HAP-1 (cell line): ENCODE measurements at regions of chr17 and their contacts with region 1.

Region 1: GRCh38 chr17:19362277-19363113 is at the start of gene B9D1:
- DNase-seq: peak; percentile 72 to 91
- H3K4me3 ChIP-seq: peak within 1 kb of the TSS; percentile 82
- H3K4me1 ChIP-seq: peaks cover 12% of the 10 kb centered on the region
- H3K27me3 ChIP-seq: no peaks in the 10 kb centered on the region

Region 2: DNA sequence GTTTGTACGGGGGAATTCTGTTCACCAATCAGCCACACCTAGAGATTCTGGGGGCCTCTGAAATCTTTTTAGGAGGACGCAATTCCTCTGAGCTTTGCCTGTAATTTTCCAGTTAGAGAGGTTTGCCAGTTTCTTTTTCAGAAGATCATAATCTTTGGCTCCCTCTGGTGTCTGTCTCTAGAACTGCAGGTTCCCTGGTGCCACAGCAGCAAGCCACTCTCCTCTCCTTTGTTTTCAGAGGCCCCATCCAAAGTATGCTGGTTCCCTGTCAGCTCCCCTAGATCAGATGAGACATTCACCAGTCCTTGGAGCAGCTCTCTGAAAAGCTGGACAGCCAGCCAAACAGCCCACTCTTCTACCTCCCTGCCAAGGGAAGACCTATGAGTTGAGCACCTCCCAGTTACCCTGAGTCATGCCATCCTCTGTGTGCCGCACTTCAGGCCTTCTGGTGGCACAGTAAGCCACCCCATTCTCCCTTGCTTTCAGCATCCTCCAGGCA is 84.6 kb after region 1 on chr17:
- in situ Hi-C with region 1: loop called (anchors 5 kb)
- DNase-seq: peak; percentile 72 to 88
- H3K4me3 ChIP-seq: no peak overlapping the region
- H3K4me1 ChIP-seq: peaks cover 18% of the 10 kb centered on the region
- H3K27me3 ChIP-seq: no peaks in the 10 kb centered on the region

Region 3: GRCh38 chr17:19513897-19514488 is 151.5 kb after region 1 on chr17:
- in situ Hi-C with region 1: loop called (anchors 5 kb)
- DNase-seq: peak; percentile 66 to 81
- H3K4me3 ChIP-seq: no peak overlapping the region
- H3K4me1 ChIP-seq: no peaks in the 10 kb centered on the region
- H3K27me3 ChIP-seq: no peaks in the 10 kb centered on the region

Region 4: DNA sequence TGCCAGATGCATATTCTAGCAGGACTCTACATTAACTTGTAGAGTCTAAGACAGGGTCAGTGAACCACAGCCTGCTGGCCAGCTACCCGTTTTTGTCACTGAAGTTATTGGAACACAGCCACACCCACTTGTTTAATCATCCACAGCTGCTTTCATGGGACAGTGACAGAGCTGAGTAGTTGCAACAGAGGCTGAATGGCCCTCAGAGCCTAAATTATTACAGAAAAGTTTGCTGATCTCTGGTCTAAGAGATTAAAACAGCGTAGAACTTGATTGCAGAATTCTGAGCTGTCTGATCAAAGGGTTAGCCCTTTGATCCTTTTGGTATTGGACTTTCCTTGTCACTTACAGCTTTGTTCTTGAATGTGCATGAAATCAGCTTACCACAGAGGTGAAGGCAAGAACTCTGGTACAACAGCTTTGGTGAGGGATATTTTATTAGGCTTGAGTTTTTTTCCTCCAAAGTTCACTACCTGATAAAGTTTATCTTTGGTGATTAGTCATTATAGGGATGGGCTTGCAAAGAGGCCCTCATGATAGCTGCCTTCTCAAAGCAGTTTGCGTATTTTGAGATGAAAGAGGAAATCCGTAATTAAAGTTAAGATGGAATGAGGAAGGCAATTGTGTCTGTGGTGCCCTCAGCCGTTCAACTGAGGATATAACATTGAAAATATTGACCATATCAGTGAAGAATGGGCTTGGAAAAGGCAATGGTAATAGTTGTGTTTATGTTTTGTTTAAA is 309.7 kb after region 1 on chr17:
- in situ Hi-C with region 1: no loop called
- DNase-seq: no peak
- H3K4me3 ChIP-seq: no peak overlapping the region
- H3K4me1 ChIP-seq: no peaks in the 10 kb centered on the region
- H3K27me3 ChIP-seq: no peaks in the 10 kb centered on the region

Region 5: DNA sequence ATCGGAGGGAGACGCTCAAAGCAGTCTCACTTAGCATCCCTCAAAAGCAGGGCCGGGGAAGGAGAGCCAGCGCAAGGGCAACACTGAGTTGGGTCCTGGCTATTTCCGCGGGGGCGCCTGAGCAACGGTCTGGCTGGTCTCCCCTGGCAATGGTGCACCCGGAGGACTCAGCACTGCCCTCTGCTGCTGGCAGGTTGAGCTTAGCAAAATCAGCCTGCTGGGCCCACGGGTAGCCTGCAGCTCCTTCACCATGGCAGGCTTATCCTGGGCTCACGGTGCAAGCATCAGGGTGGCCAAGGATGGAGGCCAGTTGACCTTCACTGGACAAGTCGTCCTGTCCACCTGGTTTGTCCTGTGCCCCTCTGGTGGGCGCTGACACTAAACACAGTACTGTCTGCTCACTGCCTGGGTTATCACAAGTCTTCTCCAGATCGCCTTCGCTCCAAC is 400.0 kb after region 1 on chr17:
- in situ Hi-C with region 1: loop called (anchors 5 kb)
- DNase-seq: peak; percentile 65 to 91
- H3K4me3 ChIP-seq: no peak overlapping the region
- H3K4me1 ChIP-seq: no peaks in the 10 kb centered on the region
- H3K27me3 ChIP-seq: no peaks in the 10 kb centered on the region